Activated CD4-positive, alpha-beta T cell treated with anti-CD3 and anti-CD28 coated beads for 36 hours (primary cell): ENCODE measurements at regions of chr4 and their contacts with region 1.

Region 1: DNA sequence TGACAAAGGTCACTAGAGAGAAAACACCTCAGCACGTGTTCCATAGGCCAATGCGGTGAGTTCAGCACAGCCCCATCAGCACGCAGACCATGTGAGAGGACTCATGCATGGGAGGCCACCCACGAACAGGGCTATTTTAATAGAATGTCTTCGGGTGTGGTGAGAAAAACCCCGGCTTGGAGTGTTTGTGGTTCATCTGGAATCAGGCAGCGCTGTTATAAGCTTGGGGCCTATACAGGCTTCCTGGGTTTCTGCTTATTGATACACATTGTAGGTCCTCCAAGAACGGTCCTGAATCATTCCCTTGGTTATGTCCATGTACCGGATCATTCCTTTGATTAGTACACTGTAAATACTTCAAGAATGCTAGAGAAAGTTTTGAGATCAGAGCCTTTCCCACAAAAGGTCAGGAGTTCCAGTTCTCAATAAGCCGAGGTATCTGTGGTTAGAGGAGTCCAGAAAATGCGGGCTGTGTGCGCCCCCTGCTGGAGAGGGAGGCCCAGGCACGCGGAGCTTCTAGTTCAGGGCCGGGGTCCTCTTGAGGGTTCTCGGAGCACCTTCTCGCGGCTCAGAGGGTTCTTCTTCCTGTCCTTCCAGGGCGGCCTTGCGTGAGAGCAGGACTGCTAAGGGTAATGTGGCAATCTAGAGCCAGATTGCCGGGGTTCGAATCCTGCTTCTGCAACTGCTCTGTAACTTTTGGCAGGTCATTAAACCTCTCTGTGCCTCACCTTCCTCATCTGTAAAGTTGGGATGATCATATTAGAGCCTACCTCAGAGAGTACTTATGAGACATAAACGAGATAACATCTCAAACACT is 51.8 kb downstream of the TLR10 start:
- DNase-seq: peak; percentile 91
- ATAC-seq: peak; percentile 80
- H3K4me3 Mint-ChIP-seq: no peak overlapping the region
- H3K27ac Mint-ChIP-seq: no peak overlapping the region
- H3K4me1 Mint-ChIP-seq: peaks cover 15% of the 10 kb centered on the region
- H3K27me3 Mint-ChIP-seq: no peaks in the 10 kb centered on the region

Region 2: DNA sequence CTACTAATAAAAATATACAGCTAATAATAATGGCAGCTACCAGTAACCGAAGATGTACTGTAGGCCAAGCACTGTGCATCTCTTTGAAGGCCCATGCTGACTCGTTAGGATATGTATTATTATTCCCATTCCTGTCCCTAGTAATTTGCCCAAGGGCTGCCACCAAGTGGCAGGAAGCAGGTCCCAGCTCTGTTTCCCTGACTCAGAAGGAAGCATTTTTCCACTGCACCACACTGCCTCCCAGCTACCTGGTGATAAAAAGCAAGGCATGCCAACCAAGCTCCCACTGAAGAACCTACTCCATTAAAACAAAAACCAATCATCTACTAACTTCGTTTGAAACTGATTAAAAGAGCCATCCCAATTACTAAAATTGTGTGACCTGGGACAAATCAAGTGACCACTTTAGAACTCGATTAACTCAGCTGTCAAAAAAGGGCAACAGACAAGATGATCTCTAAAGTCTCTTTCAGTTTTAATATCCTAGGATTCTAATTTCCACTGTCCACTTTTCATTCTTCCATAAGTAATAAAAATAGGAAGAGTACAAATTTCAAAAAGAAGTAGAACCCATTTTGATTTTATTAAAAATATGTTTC is 928.9 kb before region 1 on chr4:
- CTCF ChIA-PET with region 1: no interaction called
- POLR2A ChIA-PET with region 1: no interaction called
- intact Hi-C with region 1: loop called in 1 of 2 experiments (anchors 10 kb)
- DNase-seq: peak; percentile 48
- ATAC-seq: no peak
- H3K4me3 Mint-ChIP-seq: no peak overlapping the region
- H3K27ac Mint-ChIP-seq: no peak overlapping the region
- H3K4me1 Mint-ChIP-seq: no peaks in the 10 kb centered on the region
- H3K27me3 Mint-ChIP-seq: peaks cover 4% of the 10 kb centered on the region

Region 3: GRCh38 chr4:37994569-37994968 is 736.5 kb before region 1 on chr4:
- CTCF ChIA-PET with region 1: no interaction called
- POLR2A ChIA-PET with region 1: no interaction called
- intact Hi-C with region 1: no loop called
- DNase-seq: no peak
- ATAC-seq: no peak
- H3K4me3 Mint-ChIP-seq: no peak overlapping the region
- H3K27ac Mint-ChIP-seq: no peak overlapping the region
- H3K4me1 Mint-ChIP-seq: peaks cover 27% of the 10 kb centered on the region
- H3K27me3 Mint-ChIP-seq: no peaks in the 10 kb centered on the region

Region 4: GRCh38 chr4:38062088-38062893 is 668.7 kb before region 1 on chr4:
- CTCF ChIA-PET with region 1: interaction called, 3 read pairs
- POLR2A ChIA-PET with region 1: no interaction called
- intact Hi-C with region 1: loop called (anchors 1 kb)
- DNase-seq: peak; percentile 82
- ATAC-seq: peak; percentile 79
- H3K4me3 Mint-ChIP-seq: peak overlapping the region; percentile 75
- H3K27ac Mint-ChIP-seq: peak overlapping the region; percentile 87
- H3K4me1 Mint-ChIP-seq: peaks cover 14% of the 10 kb centered on the region
- H3K27me3 Mint-ChIP-seq: no peaks in the 10 kb centered on the region

Region 5: DNA sequence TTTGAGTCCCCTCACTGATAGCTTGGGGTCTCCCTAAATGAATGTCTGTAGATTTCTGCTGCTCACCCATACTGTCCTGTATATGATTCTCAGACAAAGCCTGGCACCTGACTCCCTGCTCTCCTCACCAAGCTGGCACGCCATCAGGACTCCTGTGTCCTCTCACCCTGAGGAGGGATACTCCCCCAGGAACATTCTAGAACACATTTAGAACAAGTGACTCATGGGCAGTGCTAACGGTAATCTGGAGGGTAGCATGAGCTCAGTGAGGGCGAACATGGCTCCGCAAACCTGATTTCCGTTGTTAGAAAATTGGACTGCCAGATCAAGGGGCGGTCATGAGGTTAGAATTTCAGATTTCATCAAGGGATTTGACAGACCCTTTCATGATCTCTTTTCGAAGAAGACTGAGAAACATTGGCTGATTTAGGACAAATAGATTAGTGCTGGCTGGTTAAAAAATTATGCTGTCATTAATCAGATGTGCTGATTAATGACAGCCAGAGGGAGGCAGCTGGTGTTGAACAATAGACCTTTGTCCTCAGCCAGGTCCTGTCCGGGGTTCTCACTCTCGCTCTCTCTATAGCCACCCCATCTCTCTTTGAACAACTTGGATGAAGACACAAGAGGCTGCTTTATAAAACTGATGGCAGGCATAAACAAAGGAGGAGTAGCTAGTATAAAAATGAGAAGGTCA is 526.6 kb before region 1 on chr4:
- CTCF ChIA-PET with region 1: no interaction called
- POLR2A ChIA-PET with region 1: no interaction called
- intact Hi-C with region 1: no loop called
- DNase-seq: no peak
- ATAC-seq: no peak
- H3K4me3 Mint-ChIP-seq: no peak overlapping the region
- H3K27ac Mint-ChIP-seq: no peak overlapping the region
- H3K4me1 Mint-ChIP-seq: peaks cover 4% of the 10 kb centered on the region
- H3K27me3 Mint-ChIP-seq: no peaks in the 10 kb centered on the region

Region 6: DNA sequence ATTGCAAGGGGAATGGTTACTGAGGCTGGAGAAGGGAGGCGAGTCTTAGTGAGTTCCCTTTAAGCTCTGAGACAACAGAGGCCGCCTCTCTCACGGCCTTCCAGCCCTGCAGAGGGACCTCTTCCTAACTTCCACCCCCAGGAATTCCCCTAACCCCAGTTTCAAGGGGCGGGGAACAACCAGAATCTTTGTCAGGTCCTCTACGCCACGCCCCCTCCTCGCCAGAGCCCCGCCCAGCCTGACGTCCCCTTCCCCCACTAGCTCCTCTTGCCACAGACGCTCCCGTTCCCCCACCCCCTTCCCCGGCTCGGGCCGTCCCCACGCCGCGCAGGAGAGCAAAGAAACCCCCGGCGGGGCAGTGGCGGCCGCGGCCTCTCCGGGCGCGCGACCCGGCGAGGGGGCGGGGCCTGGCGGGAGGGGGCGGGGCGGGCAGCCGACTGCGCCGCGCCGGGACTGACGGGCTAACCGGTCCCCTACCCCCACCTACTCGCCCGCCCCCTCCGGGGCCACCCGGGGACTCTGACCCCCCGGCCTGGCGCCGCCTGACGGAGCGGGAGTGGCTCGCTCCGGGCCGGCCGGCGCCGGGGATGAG is 313.4 kb after region 1 on chr4:
- CTCF ChIA-PET with region 1: no interaction called
- POLR2A ChIA-PET with region 1: no interaction called
- intact Hi-C with region 1: no loop called
- DNase-seq: peak; percentile 99
- ATAC-seq: peak; percentile 87
- H3K4me3 Mint-ChIP-seq: peak overlapping the region; percentile 76
- H3K27ac Mint-ChIP-seq: peak overlapping the region; percentile 69
- H3K4me1 Mint-ChIP-seq: peaks cover 48% of the 10 kb centered on the region
- H3K27me3 Mint-ChIP-seq: no peaks in the 10 kb centered on the region